B cell (primary cell): ENCODE measurements at regions of chr2 and their contacts with region 1.

Region 1: GRCh38 chr2:111209045-111209514 is 88.4 kb downstream of the BCL2L11 start:
- DNase-seq: peak; percentile 68
- ATAC-seq: peak; percentile 92
- H3K4me3 ChIP-seq: no peak overlapping the region
- H3K4me3 Mint-ChIP-seq: peak overlapping the region; percentile 54
- H3K27ac ChIP-seq: peak overlapping the region in 1 of 2 donors; percentile 24
- H3K27ac Mint-ChIP-seq: peak overlapping the region; percentile 77
- H3K4me1 ChIP-seq: peaks cover 8% of the 10 kb centered on the region in 2 donors
- H3K4me1 Mint-ChIP-seq: peaks cover 21% of the 10 kb centered on the region
- H3K27me3 ChIP-seq: no peaks in the 10 kb centered on the region
- H3K27me3 Mint-ChIP-seq: no peaks in the 10 kb centered on the region
- CTCF ChIP-seq: no peak

Region 2: DNA sequence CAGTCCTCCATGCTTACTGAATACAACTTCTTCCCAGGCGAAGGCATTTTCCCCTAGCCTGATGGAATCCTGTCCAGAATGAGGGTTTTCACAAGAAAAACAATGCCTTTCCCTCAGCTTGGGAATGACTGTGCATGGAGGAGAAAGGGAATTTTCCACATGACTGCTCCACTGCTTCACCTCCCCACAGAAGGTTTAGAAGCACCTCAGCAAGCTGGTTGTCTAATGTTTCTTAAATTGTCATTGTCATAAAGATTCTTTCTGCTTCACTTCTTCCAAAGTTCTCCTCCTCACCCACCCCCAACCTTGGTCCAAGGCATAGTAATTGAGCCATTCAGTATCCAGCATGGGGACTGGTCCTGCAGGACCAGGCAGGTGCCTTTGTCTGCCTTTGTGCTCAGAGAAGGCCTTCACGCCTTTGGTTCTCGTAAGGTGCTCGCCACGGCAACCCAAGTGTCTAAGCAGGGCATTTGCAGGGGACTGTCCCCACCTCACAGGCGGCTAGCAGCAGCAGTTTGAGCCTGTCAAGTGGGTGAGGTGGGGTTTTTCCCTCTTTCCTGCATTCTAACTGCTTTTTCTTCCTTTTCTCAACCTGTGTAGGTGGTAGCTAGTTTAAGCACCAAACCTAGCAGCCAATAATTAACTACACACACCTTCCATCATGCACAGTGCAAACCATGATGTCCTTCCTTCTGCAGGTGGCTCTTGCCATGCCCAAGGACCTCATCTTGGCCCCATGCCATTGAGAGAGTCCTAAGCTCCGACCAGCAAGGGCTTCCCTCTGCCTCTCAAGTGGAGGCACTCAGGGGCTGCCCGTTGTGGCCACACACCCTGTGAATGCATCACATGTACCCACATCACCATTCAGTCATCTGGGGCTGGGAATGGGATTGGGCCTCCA is 154.0 kb before region 1 on chr2:
- CTCF ChIA-PET with region 1: no interaction called
- POLR2A ChIA-PET with region 1: no interaction called
- intact Hi-C with region 1: loop called (anchors 10 kb)
- DNase-seq: peak; percentile 60
- ATAC-seq: peak; percentile 68
- H3K4me3 ChIP-seq: no peak overlapping the region
- H3K4me3 Mint-ChIP-seq: peak overlapping the region; percentile 56
- H3K27ac ChIP-seq: peak overlapping the region in 1 of 2 donors; percentile 34
- H3K27ac Mint-ChIP-seq: peak overlapping the region; percentile 78
- H3K4me1 ChIP-seq: peaks cover 55 to 67% of the 10 kb centered on the region in 2 donors
- H3K4me1 Mint-ChIP-seq: peaks cover 58% of the 10 kb centered on the region
- H3K27me3 ChIP-seq: no peaks in the 10 kb centered on the region
- H3K27me3 Mint-ChIP-seq: no peaks in the 10 kb centered on the region
- CTCF ChIP-seq: no peak

Region 3: GRCh38 chr2:111219285-111219684 is 10.2 kb after region 1 on chr2:
- CTCF ChIA-PET with region 1: interaction called, 10 read pairs
- POLR2A ChIA-PET with region 1: interaction called, 8 read pairs
- intact Hi-C with region 1: loop called (anchors 1 kb)
- DNase-seq: peak; percentile 83
- ATAC-seq: peak; percentile 81
- H3K4me3 ChIP-seq: peak overlapping the region in 1 of 5 experiments; percentile 25
- H3K4me3 Mint-ChIP-seq: peak overlapping the region; percentile 81
- H3K27ac ChIP-seq: peak overlapping the region in 1 of 2 donors; percentile 10
- H3K27ac Mint-ChIP-seq: peak overlapping the region; percentile 88
- H3K4me1 ChIP-seq: peaks cover 23 to 27% of the 10 kb centered on the region in 2 donors
- H3K4me1 Mint-ChIP-seq: peaks cover 41% of the 10 kb centered on the region
- H3K27me3 ChIP-seq: no peaks in the 10 kb centered on the region
- H3K27me3 Mint-ChIP-seq: peaks cover 8% of the 10 kb centered on the region
- CTCF ChIP-seq: no peak